HCT116 (cell line): ENCODE measurements at regions of chr14 and their contacts with region 1.

Region 1: GRCh38 chr14:68248481-68249255 is 429.1 kb downstream of the RAD51B start:
- DNase-seq: peak; percentile 28
- ATAC-seq: peak; percentile 32
- H3K4me3 ChIP-seq: peak overlapping the region in 1 of 2 experiments; percentile 17; a peak in 1 of 4 replicates
- H3K27ac ChIP-seq: peak overlapping the region; percentile 100
- H3K4me1 ChIP-seq: peaks cover 68 to 85% of the 10 kb centered on the region in 2 experiments
- H3K27me3 ChIP-seq: no peaks in the 10 kb centered on the region
- CTCF ChIP-seq: peak; percentile 42 to 80 (median 71); a peak in 5 of 6 replicates
- POLR2A ChIP-seq: no peak
- RAD21 ChIP-seq: peak; percentile 94

Region 2: GRCh38 chr14:67934008-67934481 is 314.6 kb before region 1 on chr14:
- CTCF ChIA-PET with region 1: interaction called, 12 read pairs
- POLR2A ChIA-PET with region 1: no interaction called
- RAD21 ChIA-PET with region 1: interaction called in 1 of 2 experiments, 3 read pairs
- intact Hi-C with region 1: no loop called
- DNase-seq: peak; percentile 71
- ATAC-seq: peak; percentile 97
- H3K4me3 ChIP-seq: no peak overlapping the region
- H3K27ac ChIP-seq: peak overlapping the region; percentile 49; the same call in 1 of the 2 replicates
- H3K4me1 ChIP-seq: peaks cover 5 to 18% of the 10 kb centered on the region in 2 experiments; a peak in 1 of 4 replicates
- H3K27me3 ChIP-seq: no peaks in the 10 kb centered on the region
- CTCF ChIP-seq: peak; percentile 54 to 91 (median 80)
- POLR2A ChIP-seq: no peak
- RAD21 ChIP-seq: peak; percentile 88

Region 3: GRCh38 chr14:68020999-68021663 is 227.5 kb before region 1 on chr14:
- CTCF ChIA-PET with region 1: no interaction called
- POLR2A ChIA-PET with region 1: no interaction called
- RAD21 ChIA-PET with region 1: no interaction called
- intact Hi-C with region 1: no loop called
- DNase-seq: no peak
- ATAC-seq: no peak
- H3K4me3 ChIP-seq: no peak overlapping the region
- H3K27ac ChIP-seq: no peak overlapping the region
- H3K4me1 ChIP-seq: peaks cover 0 to 10% of the 10 kb centered on the region in 2 experiments; a peak in 2 of 4 replicates
- H3K27me3 ChIP-seq: no peaks in the 10 kb centered on the region
- CTCF ChIP-seq: no peak
- POLR2A ChIP-seq: no peak
- RAD21 ChIP-seq: no peak

Region 4: GRCh38 chr14:68042608-68043210 is 206.0 kb before region 1 on chr14:
- CTCF ChIA-PET with region 1: no interaction called
- POLR2A ChIA-PET with region 1: no interaction called
- RAD21 ChIA-PET with region 1: no interaction called
- intact Hi-C with region 1: no loop called
- DNase-seq: no peak
- ATAC-seq: no peak
- H3K4me3 ChIP-seq: no peak overlapping the region
- H3K27ac ChIP-seq: peak overlapping the region; percentile 12; the same call in 1 of the 2 replicates
- H3K4me1 ChIP-seq: peaks cover 0 to 12% of the 10 kb centered on the region in 2 experiments; a peak in 1 of 4 replicates
- H3K27me3 ChIP-seq: no peaks in the 10 kb centered on the region
- CTCF ChIP-seq: no peak
- POLR2A ChIP-seq: no peak
- RAD21 ChIP-seq: no peak

Region 5: DNA sequence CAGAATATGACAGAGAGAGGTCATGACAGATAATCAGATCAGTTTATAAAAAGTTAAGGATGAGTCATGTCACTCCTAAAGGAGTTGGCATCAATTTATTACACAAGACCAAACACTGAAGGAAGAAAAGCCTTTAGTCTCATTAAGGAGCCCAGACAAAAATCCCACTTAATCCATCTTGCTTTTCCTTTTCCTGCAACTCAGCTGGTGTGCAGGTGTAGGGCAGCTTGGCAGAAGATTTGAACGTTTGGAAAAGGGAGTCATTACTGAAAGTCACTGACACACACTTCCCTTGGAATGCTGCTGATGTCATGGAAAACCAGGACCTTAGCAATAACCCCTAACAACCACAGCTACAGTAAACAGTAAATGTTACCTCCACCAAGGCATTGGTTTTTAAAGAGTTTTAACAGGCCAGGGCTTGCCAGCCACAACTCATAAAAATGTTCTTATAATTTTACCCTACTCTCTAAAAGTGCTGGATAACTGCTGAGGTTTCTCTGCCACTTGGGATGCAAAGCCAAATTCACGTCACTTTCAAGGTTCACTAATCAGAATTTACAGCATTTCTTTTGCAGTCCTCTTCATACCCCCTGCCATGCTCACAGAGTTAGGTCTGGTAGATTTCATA is 108.4 kb before region 1 on chr14:
- CTCF ChIA-PET with region 1: no interaction called
- POLR2A ChIA-PET with region 1: no interaction called
- RAD21 ChIA-PET with region 1: no interaction called
- intact Hi-C with region 1: loop called (anchors 5 kb)
- DNase-seq: peak; percentile 95
- ATAC-seq: peak; percentile 62
- H3K4me3 ChIP-seq: peak overlapping the region in 1 of 2 experiments; percentile 6; a peak in 1 of 4 replicates
- H3K27ac ChIP-seq: peak overlapping the region; percentile 99
- H3K4me1 ChIP-seq: peaks cover 84 to 86% of the 10 kb centered on the region in 2 experiments
- H3K27me3 ChIP-seq: no peaks in the 10 kb centered on the region
- CTCF ChIP-seq: no peak
- POLR2A ChIP-seq: no peak
- RAD21 ChIP-seq: peak; percentile 34

Region 6: DNA sequence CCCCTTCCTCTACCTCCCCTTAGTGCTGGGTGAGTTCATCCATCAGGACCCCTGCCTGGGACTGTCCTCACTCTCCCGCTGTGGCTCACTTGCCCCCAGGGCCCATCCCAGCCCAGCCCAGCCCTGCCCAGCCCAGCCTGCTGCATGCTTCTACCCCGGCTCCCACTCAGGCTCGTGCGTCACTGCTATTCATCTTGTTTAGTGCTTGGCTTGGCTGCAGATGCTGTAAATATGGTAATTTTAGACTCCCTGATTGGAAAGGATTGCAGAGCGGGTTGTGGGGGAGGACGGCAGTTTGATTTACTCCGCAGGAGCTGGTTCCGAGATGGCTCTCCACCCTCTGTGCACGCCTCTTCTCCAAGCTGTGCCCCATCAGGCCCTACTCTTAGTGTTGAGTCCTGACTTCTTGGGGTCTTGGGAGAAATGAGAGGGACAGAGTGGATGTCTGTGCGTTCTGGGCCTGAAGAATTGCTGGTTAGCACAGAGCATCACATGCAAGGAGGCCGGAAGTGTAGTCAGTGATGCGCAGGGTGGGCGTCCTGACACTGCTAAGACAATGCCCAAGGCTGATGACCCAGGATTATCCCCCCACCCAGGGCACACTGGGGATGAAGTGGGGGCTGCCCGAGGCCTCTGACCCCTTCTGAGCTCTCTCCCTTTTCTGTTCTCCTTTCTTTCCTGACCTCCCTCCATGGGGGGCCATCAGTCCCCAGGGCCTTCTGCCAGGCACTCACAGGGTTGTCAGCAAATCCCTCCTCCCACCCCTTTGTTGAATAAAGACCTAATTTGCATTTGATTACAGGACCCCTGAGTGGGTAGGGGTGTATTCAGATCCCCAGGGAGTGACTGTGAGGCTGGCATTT is 299.8 kb after region 1 on chr14:
- CTCF ChIA-PET with region 1: no interaction called
- POLR2A ChIA-PET with region 1: no interaction called
- RAD21 ChIA-PET with region 1: no interaction called
- intact Hi-C with region 1: loop called (anchors 1 kb)
- DNase-seq: peak; percentile 82
- ATAC-seq: peak; percentile 77
- H3K4me3 ChIP-seq: peak overlapping the region; percentile 4 to 38; a peak in 3 of 4 replicates
- H3K27ac ChIP-seq: peak overlapping the region; percentile 98
- H3K4me1 ChIP-seq: peaks cover 74 to 94% of the 10 kb centered on the region in 2 experiments
- H3K27me3 ChIP-seq: no peaks in the 10 kb centered on the region
- CTCF ChIP-seq: no peak
- POLR2A ChIP-seq: no peak
- RAD21 ChIP-seq: no peak

Region 7: GRCh38 chr14:68788996-68789820 is 540.5 kb after region 1 on chr14:
- CTCF ChIA-PET with region 1: interaction called, 13 read pairs
- POLR2A ChIA-PET with region 1: interaction called, 45 read pairs
- RAD21 ChIA-PET with region 1: interaction called, 9 to 14 read pairs
- intact Hi-C with region 1: loop called (anchors 1 kb)
- DNase-seq: no peak
- ATAC-seq: peak; percentile 14
- H3K4me3 ChIP-seq: peak overlapping the region; percentile 83 to 89
- H3K27ac ChIP-seq: peak overlapping the region; percentile 99
- H3K4me1 ChIP-seq: peaks cover 58 to 83% of the 10 kb centered on the region in 2 experiments
- H3K27me3 ChIP-seq: no peaks in the 10 kb centered on the region
- CTCF ChIP-seq: peak in 2 of 3 experiments; percentile 67 to 74; a peak in 4 of 6 replicates
- POLR2A ChIP-seq: no peak
- RAD21 ChIP-seq: no peak

Region 8: GRCh38 chr14:68824517-68825347 is 576.1 kb after region 1 on chr14:
- CTCF ChIA-PET with region 1: interaction called, 13 read pairs
- POLR2A ChIA-PET with region 1: interaction called, 17 read pairs
- RAD21 ChIA-PET with region 1: interaction called, 3 to 5 read pairs
- intact Hi-C with region 1: loop called (anchors 2 kb)
- DNase-seq: peak; percentile 76
- ATAC-seq: peak; percentile 99
- H3K4me3 ChIP-seq: peak overlapping the region; percentile 21 to 28; a peak in 3 of 4 replicates
- H3K27ac ChIP-seq: peak overlapping the region; percentile 38
- H3K4me1 ChIP-seq: peaks cover 21 to 23% of the 10 kb centered on the region in 2 experiments
- H3K27me3 ChIP-seq: no peaks in the 10 kb centered on the region
- CTCF ChIP-seq: peak in 2 of 3 experiments; percentile 95 to 97; a peak in 4 of 6 replicates
- POLR2A ChIP-seq: no peak
- RAD21 ChIP-seq: no peak